Mucosa of descending colon (tissue), 3 donors: ENCODE measurements at regions of chr11 and their contacts with region 1.

Region 1: DNA sequence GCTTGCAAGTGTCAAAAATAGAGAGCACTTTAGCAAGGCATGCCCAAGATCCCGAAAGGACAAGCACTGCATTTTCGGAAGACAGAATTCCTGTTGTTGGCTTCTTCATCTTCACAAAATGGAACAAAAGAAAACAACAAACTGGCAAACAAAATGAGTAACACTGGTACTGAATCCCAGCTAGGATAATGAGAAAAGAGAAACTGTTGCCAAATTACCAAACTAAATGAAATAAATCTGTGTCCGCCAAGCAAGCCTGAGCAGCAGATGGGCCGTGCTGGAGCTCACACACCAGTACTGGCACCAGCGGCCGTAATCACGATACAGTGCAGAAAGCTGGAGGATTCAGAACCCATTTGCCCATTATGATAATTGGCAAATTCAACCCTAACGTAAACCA is 30.6 kb downstream of the TUB start:
- DNase-seq: no peak
- ATAC-seq: no peak
- H3K4me3 ChIP-seq: no peak overlapping the region
- H3K4me1 ChIP-seq: no peaks in the 10 kb centered on the region
- CTCF ChIP-seq: no peak

Region 2: GRCh38 chr11:7927635-7928034 is 184.0 kb before region 1 on chr11:
- intact Hi-C with region 1: no loop called
- DNase-seq: no peak
- ATAC-seq: no peak
- H3K4me3 ChIP-seq: no peak overlapping the region
- H3K4me1 ChIP-seq: no peaks in the 10 kb centered on the region
- CTCF ChIP-seq: no peak

Region 3: DNA sequence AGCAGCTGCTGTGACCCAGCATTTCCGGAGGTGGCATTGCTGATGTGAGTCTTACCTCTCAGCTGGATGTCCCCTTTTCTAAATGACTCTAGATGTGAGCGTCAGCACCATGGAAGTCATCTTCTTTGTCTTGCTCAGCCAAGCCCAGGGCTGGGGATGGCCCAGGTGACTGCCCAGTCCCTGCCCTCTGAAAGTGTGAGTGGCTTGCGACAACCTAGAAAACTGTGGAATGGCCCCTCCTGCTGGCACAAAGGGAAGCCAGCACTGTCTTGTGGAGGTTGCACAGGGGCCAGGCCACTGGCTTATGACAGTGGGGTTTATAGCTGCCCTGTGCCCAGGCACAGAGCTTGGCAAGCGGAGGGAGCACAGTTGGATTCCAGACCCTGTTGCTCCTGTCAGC is 24.5 kb before region 1 on chr11:
- intact Hi-C with region 1: loop called in 1 of 2 experiments (anchors 2 kb)
- DNase-seq: no peak
- ATAC-seq: peak; percentile 13
- H3K4me3 ChIP-seq: no peak overlapping the region
- H3K4me1 ChIP-seq: no peaks in the 10 kb centered on the region
- CTCF ChIP-seq: no peak

Region 4: DNA sequence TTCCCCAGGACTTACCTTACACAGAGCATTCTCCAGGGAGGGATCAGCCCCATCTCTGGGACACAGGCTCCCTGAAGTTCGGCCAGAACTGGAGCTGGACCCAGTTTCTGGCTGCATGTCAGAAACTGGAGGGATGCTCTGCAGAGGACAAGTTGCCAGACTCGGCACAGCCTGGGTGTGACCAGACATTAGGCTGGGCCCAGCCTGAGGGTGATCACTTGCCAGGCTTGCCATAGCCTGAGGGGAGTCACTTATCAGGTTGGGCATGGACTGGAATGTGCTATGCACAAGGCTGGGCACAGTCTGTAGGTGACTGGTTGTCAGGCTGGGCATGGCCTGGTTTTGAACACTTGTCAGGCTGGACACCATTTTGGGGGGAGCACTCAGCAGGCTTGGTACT is 513.1 kb after region 1 on chr11:
- intact Hi-C with region 1: no loop called
- DNase-seq: no peak
- ATAC-seq: no peak
- H3K4me3 ChIP-seq: no peak overlapping the region
- H3K4me1 ChIP-seq: no peaks in the 10 kb centered on the region
- CTCF ChIP-seq: no peak